ENCODE measurements at regions of chr17 and their contacts with region 1.

Region 1: GRCh38 chr17:6913608-6914443 is 82.0 kb upstream of the ALOX12 start:
- DNase-seq: no peak
- ATAC-seq: peak; percentile 92
- H3K4me3 ChIP-seq: no peak overlapping the region
- H3K27ac ChIP-seq: no peak overlapping the region
- H3K4me1 ChIP-seq: peaks cover 4% of the 10 kb centered on the region; the same call in 1 of the 2 replicates
- H3K27me3 ChIP-seq: no peaks in the 10 kb centered on the region
- CTCF ChIP-seq: peak; percentile 74 to 90 (median 87)
- EP300 ChIP-seq: no peak
- POLR2A ChIP-seq: no peak
- RAD21 ChIP-seq: peak; percentile 91

Region 2: GRCh38 chr17:6843241-6843880 is 70.5 kb before region 1 on chr17:
- CTCF ChIA-PET with region 1: interaction called, 49 read pairs
- POLR2A ChIA-PET with region 1: no interaction called
- RAD21 ChIA-PET with region 1: interaction called, 13 read pairs
- SMC1A ChIA-PET with region 1: interaction called, 26 read pairs
- in situ Hi-C with region 1: no loop called
- intact Hi-C with region 1: no loop called
- DNase-seq: no peak
- ATAC-seq: peak; percentile 59; the same call in 2 of the 3 replicates
- H3K4me3 ChIP-seq: no peak overlapping the region
- H3K27ac ChIP-seq: no peak overlapping the region
- H3K4me1 ChIP-seq: no peaks in the 10 kb centered on the region
- H3K27me3 ChIP-seq: no peaks in the 10 kb centered on the region
- CTCF ChIP-seq: peak; percentile 16 to 52 (median 34); a peak in 4 of 6 replicates
- EP300 ChIP-seq: no peak
- POLR2A ChIP-seq: no peak
- RAD21 ChIP-seq: peak; percentile 45

Region 3: GRCh38 chr17:6927290-6928126 is 13.7 kb after region 1 on chr17:
- CTCF ChIA-PET with region 1: interaction called, 24 read pairs
- POLR2A ChIA-PET with region 1: no interaction called
- RAD21 ChIA-PET with region 1: interaction called, 3 read pairs
- SMC1A ChIA-PET with region 1: interaction called, 6 read pairs
- in situ Hi-C with region 1: no loop called
- intact Hi-C with region 1: no loop called
- DNase-seq: no peak
- ATAC-seq: no peak
- H3K4me3 ChIP-seq: no peak overlapping the region
- H3K27ac ChIP-seq: no peak overlapping the region
- H3K4me1 ChIP-seq: no peaks in the 10 kb centered on the region
- H3K27me3 ChIP-seq: no peaks in the 10 kb centered on the region
- CTCF ChIP-seq: no peak
- EP300 ChIP-seq: no peak
- POLR2A ChIP-seq: no peak
- RAD21 ChIP-seq: no peak

Region 4: DNA sequence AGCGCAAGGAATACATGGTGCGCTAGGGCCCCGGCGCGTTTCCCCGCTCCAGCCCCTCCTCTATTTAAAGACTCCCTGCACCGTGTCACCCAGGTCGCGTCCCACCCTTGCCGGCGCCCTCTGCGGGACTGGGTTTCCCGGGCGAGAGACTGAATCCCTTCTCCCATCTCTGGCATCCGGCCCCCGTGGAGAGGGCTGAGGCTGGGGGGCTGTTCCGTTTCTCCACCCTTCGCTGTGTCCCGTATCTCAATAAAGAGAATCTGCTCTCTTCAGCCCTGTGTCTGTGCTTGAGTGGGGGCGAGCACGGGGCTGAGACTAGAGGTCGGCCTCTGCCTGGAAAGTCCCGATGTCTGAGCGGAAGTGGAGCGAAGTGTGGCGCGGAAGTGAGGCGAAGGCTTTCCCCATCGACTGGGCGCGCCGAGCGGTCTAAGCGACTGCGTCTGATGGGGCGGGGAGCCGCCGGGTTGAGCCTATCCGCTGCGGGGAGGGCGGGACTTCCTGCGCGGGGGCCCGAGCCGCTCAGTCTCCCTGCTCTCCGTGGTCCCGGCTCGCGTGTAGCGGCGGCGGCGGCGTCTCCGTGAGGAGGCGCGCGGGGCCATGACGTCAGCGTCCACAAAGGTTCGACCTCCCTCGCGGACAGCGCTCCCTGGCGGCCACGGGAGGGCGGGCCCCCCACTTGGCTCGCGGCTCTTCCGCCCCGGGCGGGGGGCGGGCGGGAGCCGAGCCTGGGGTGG is 100.6 kb after region 1 on chr17:
- CTCF ChIA-PET with region 1: interaction called, 237 read pairs
- POLR2A ChIA-PET with region 1: interaction called, 6 read pairs
- RAD21 ChIA-PET with region 1: interaction called, 4 read pairs
- SMC1A ChIA-PET with region 1: interaction called, 4 read pairs
- in situ Hi-C with region 1: loop called (anchors 5 kb)
- intact Hi-C with region 1: no loop called
- DNase-seq: peak; percentile 86
- ATAC-seq: peak; percentile 89
- H3K4me3 ChIP-seq: peak overlapping the region; percentile 100
- H3K27ac ChIP-seq: peak overlapping the region; percentile 100
- H3K4me1 ChIP-seq: peaks cover 34% of the 10 kb centered on the region
- H3K27me3 ChIP-seq: no peaks in the 10 kb centered on the region
- CTCF ChIP-seq: peak; percentile 46 to 67 (median 60); a peak in 5 of 6 replicates
- EP300 ChIP-seq: peak; percentile 26 to 46; a peak in 2 of 4 replicates
- POLR2A ChIP-seq: peak; percentile 84
- RAD21 ChIP-seq: no peak

Region 5: GRCh38 chr17:7136266-7136877 is 222.5 kb after region 1 on chr17:
- CTCF ChIA-PET with region 1: interaction called, 5 read pairs
- POLR2A ChIA-PET with region 1: interaction called, 5 read pairs
- RAD21 ChIA-PET with region 1: interaction called, 3 read pairs
- SMC1A ChIA-PET with region 1: interaction called, 3 read pairs
- in situ Hi-C with region 1: loop called (anchors 5 kb)
- intact Hi-C with region 1: loop called (anchors 5 kb)
- DNase-seq: peak; percentile 33
- ATAC-seq: no peak
- H3K4me3 ChIP-seq: no peak overlapping the region
- H3K27ac ChIP-seq: no peak overlapping the region
- H3K4me1 ChIP-seq: peaks cover 18% of the 10 kb centered on the region
- H3K27me3 ChIP-seq: peaks cover 0 to 3% of the 10 kb centered on the region in 2 experiments; a peak in 1 of 4 replicates
- CTCF ChIP-seq: peak; percentile 83 to 91 (median 89)
- EP300 ChIP-seq: no peak
- POLR2A ChIP-seq: no peak
- RAD21 ChIP-seq: peak; percentile 98

Measured in GM12878 (cell line).